Mammary epithelial cell (primary cell): ENCODE measurements at regions of chr7 and their contacts with region 1.

Region 1: DNA sequence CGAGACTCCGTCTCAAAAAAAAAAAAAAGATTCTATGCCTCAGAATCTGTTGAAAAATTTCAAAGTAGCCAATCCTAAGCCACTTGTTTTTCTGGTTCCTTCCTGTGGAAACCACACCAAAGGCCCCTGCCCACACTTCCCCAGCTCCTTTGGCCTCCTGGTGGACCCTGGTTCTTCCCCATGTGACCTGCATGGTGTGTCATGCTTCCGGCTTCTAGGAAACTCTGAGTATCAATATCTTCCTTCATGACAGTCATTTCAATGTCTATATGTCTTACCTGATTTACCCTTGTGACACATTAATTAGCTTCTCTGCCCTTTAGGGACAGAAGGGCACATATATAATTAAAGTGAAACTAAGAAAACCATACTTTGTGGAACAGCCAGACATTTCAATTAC is 80.4 kb upstream of the GRB10 start:
- DNase-seq: no peak
- H3K4me3 ChIP-seq: no peak overlapping the region
- H3K27ac ChIP-seq: no peak overlapping the region
- H3K4me1 ChIP-seq: no peaks in the 10 kb centered on the region
- H3K27me3 ChIP-seq: no peaks in the 10 kb centered on the region
- CTCF ChIP-seq: no peak

Region 2: GRCh38 chr7:50838675-50839377 is 24.2 kb before region 1 on chr7:
- CTCF ChIA-PET with region 1: no interaction called
- dilution Hi-C with region 1: no loop called
- in situ Hi-C with region 1: no loop called
- intact Hi-C with region 1: loop called (anchors 1 kb)
- DNase-seq: no peak
- H3K4me3 ChIP-seq: no peak overlapping the region
- H3K27ac ChIP-seq: no peak overlapping the region
- H3K4me1 ChIP-seq: no peaks in the 10 kb centered on the region
- H3K27me3 ChIP-seq: peaks cover 8% of the 10 kb centered on the region
- CTCF ChIP-seq: no peak

Region 3: DNA sequence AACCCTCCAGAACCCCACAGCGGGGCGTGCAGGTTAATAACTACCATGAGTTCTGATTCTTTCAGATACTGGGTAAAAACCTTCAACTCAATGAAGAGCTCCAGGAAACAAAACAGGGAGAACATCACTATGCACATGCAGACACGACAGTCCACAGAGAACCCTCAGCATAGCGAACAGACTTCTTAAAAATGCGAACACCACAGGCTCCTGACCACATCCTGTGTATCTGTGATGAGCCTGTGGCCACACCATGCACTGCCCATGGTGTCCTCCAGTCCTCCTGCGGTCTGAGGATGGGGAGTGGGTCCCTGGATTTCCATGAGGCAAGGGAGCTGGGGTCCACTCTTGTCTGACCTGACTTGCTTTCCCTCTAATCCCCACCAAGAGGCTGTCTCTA is 346.4 kb after region 1 on chr7:
- CTCF ChIA-PET with region 1: no interaction called
- dilution Hi-C with region 1: no loop called
- in situ Hi-C with region 1: no loop called
- intact Hi-C with region 1: no loop called
- DNase-seq: no peak
- H3K4me3 ChIP-seq: no peak overlapping the region
- H3K27ac ChIP-seq: no peak overlapping the region
- H3K4me1 ChIP-seq: no peaks in the 10 kb centered on the region
- H3K27me3 ChIP-seq: no peaks in the 10 kb centered on the region
- CTCF ChIP-seq: no peak